SK-N-SH (cell line): ENCODE measurements at regions of chr10 and their contacts with region 1.

Region 1: DNA sequence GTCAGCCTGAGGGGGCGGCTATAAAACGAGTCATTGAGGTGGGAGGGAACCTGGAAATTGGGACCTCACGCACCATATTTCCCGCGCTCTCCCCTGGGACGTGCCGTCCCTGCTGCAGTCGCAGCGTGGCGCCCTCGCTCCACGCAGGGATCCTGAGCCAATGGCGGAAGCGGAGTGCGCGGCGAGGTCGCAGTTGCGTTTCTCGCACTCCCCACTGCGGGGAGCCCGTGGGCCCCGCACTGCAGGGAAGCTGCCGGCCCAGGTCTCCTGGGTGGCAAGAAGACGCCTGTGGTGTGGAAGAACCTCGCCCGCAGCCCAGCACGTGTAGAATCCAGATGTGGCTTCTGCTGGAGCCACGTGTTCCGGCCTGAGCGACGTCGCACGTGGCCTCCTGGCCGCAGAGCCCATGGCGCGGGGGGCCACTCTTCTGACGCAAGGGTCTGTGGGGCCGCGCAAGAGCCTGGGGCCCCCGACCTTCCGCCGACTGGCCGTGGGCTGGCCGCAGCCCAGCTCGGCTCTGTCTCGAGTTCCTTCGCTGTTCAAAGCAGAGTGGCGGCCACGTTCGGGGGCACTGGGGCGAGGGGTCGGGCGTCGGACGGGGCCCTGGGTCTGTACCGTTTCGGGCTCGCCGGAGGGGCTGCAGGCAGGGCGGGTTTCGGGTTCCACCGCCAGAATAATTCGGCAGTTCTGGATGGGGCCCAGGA is 26.4 kb downstream of the HIF1AN start:
- DNase-seq: peak; percentile 94
- H3K4me3 ChIP-seq: no peak overlapping the region; a peak in 1 of 4 replicates
- H3K27ac ChIP-seq: no peak overlapping the region
- H3K4me1 ChIP-seq: no peaks in the 10 kb centered on the region; a peak in 1 of 4 replicates
- H3K27me3 ChIP-seq: no peaks in the 10 kb centered on the region
- CTCF ChIP-seq: peak; percentile 67
- EP300 ChIP-seq: no peak
- RAD21 ChIP-seq: peak; percentile 97

Region 2: GRCh38 chr10:100315615-100316014 is 246.5 kb before region 1 on chr10:
- CTCF ChIA-PET with region 1: no interaction called
- POLR2A ChIA-PET with region 1: no interaction called
- DNase-seq: no peak
- H3K4me3 ChIP-seq: no peak overlapping the region
- H3K27ac ChIP-seq: no peak overlapping the region
- H3K4me1 ChIP-seq: no peaks in the 10 kb centered on the region
- H3K27me3 ChIP-seq: peaks cover 43% of the 10 kb centered on the region; the same call in 1 of the 2 replicates
- CTCF ChIP-seq: no peak
- EP300 ChIP-seq: no peak
- RAD21 ChIP-seq: no peak

Region 3: DNA sequence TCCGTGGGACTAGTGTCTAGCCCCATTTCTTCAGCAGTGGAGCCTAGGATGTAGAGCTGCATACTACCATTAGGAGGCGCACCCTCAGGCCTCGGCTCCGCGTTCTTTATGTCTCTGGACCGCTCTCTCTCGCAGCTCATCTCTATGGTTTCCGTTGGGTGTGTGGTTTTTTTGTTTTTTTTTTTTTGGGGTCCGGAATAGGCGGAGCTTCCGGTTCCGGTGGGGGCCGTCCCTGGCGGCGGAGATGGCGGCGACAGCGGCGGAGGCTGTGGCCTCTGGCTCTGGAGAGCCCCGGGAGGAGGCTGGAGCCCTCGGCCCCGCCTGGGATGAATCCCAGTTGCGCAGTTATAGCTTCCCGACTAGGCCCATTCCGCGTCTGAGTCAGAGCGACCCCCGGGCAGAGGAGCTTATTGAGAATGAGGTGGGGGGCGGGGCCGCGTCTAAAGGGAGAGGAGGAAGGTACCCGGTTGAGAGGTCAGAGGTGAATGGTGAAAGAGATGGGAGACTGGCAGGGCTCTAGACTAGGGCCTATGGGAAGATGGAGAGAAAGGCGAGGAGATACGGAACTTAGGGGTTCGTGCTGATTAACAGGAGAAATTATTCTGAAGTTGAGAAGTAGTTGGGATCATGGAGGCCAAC is 26.3 kb before region 1 on chr10 and contains the start of gene HIF1AN:
- CTCF ChIA-PET with region 1: interaction called, 11 read pairs
- POLR2A ChIA-PET with region 1: no interaction called
- DNase-seq: peak; percentile 95
- H3K4me3 ChIP-seq: peak within 1 kb of the TSS; percentile 69 to 82
- H3K27ac ChIP-seq: peak within 1 kb of the TSS; percentile 26 to 45; a peak in 2 of 4 replicates
- H3K4me1 ChIP-seq: peaks cover 9% of the 10 kb centered on the region in 2 experiments; a peak in 3 of 4 replicates
- H3K27me3 ChIP-seq: no peaks in the 10 kb centered on the region
- CTCF ChIP-seq: peak; percentile 92
- EP300 ChIP-seq: peak; percentile 15 to 18; a peak in 2 of 4 replicates
- RAD21 ChIP-seq: peak; percentile 17; the same call in 1 of the 2 replicates
- polyA plus RNA-seq, gene HIF1AN: 8.1 and 11.0 TPM in 2 replicates

Region 4: GRCh38 chr10:100579261-100580090 is 17.3 kb after region 1 on chr10:
- CTCF ChIA-PET with region 1: interaction called, 19 read pairs
- POLR2A ChIA-PET with region 1: no interaction called
- DNase-seq: no peak
- H3K4me3 ChIP-seq: no peak overlapping the region
- H3K27ac ChIP-seq: no peak overlapping the region
- H3K4me1 ChIP-seq: no peaks in the 10 kb centered on the region
- H3K27me3 ChIP-seq: peaks cover 46% of the 10 kb centered on the region
- CTCF ChIP-seq: no peak
- EP300 ChIP-seq: no peak
- RAD21 ChIP-seq: no peak

Region 5: DNA sequence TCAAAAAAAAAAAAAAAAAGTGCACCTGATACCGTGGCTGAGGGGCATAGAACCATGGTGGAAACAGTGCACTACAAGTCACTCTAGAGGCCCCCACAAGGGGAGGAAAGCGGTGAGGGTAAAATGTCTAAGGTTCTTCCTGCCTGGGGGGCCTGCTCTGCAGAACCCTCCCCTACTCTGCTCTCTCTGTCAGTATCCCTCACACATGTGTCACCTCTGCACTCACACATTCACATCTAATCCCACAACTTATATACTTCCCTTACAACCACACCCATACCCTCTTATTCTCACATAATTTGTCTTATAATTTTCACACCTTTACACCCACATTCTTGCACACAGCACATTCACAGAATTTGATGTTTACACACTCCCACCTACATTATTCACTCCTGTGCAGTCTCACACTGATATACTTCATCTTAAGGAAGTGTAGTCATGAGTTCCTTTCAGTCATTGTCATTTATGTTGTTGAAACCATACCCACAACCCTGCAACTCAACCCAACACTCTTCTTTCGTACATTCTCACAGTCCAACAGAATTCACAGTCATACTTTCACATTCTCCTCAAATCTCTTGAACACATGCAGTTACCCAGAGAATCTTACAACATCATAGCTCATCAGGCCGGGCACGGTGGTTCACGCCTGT is 115.3 kb after region 1 on chr10:
- CTCF ChIA-PET with region 1: interaction called, 12 read pairs
- POLR2A ChIA-PET with region 1: no interaction called
- DNase-seq: no peak
- H3K4me3 ChIP-seq: no peak overlapping the region
- H3K27ac ChIP-seq: no peak overlapping the region
- H3K4me1 ChIP-seq: peaks cover 0 to 2% of the 10 kb centered on the region in 2 experiments; a peak in 1 of 4 replicates
- H3K27me3 ChIP-seq: peaks cover 27% of the 10 kb centered on the region; the same call in 1 of the 2 replicates
- CTCF ChIP-seq: no peak
- EP300 ChIP-seq: no peak
- RAD21 ChIP-seq: no peak

Region 6: GRCh38 chr10:100766693-100767421 is 204.7 kb after region 1 on chr10:
- CTCF ChIA-PET with region 1: interaction called, 17 read pairs
- POLR2A ChIA-PET with region 1: no interaction called
- DNase-seq: peak; percentile 76
- H3K4me3 ChIP-seq: no peak overlapping the region
- H3K27ac ChIP-seq: peak overlapping the region in 1 of 2 experiments; percentile 97; a peak in 2 of 4 replicates
- H3K4me1 ChIP-seq: peaks cover 0 to 35% of the 10 kb centered on the region in 2 experiments; a peak in 2 of 4 replicates
- H3K27me3 ChIP-seq: peaks cover 37% of the 10 kb centered on the region
- CTCF ChIP-seq: no peak
- EP300 ChIP-seq: peak in 1 of 2 experiments; percentile 79; a peak in 2 of 4 replicates
- RAD21 ChIP-seq: peak; percentile 49

Region 7: GRCh38 chr10:100827819-100828737 is 265.9 kb after region 1 on chr10:
- CTCF ChIA-PET with region 1: interaction called, 37 read pairs
- POLR2A ChIA-PET with region 1: no interaction called
- DNase-seq: peak; percentile 91
- H3K4me3 ChIP-seq: peak overlapping the region; percentile 38 to 39
- H3K27ac ChIP-seq: no peak overlapping the region
- H3K4me1 ChIP-seq: peaks cover 0 to 17% of the 10 kb centered on the region in 2 experiments; a peak in 1 of 4 replicates
- H3K27me3 ChIP-seq: peaks cover 77% of the 10 kb centered on the region
- CTCF ChIP-seq: no peak; the same call in 1 of the 2 replicates
- EP300 ChIP-seq: no peak
- RAD21 ChIP-seq: peak; percentile 64

Region 8: DNA sequence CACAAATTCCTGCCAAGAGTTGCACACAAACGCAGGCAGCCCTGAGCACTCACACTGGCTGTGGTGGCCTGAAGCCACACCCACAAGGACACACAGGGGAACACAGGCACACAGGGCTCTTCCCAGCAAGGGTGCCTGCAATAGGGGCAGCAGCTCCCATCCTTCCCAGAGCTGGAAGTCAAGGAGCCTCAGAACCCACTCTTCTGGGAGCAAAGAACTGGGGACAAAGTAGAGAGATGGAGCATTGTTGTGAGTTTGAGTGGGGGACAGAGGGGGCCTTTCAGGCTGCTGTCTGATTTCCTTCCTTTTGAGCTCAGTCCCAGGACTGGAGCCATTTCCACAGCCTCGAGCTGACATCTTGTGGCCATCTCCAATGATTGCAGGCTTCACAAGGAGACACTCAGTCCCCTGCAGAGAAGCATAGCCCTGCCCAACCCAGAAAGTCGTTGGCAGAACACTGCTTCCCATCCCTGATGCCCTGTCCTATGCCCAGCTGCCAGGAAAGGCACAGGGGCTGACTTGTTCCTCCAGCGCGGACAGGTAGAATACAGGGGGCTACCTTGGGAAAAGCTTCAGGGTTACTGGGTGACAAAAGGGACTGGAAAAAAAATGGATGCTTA is 316.2 kb after region 1 on chr10:
- CTCF ChIA-PET with region 1: interaction called, 143 read pairs
- POLR2A ChIA-PET with region 1: interaction called, 6 read pairs
- DNase-seq: peak; percentile 80
- H3K4me3 ChIP-seq: no peak overlapping the region
- H3K27ac ChIP-seq: no peak overlapping the region
- H3K4me1 ChIP-seq: peaks cover 0 to 30% of the 10 kb centered on the region in 2 experiments; a peak in 2 of 4 replicates
- H3K27me3 ChIP-seq: no peaks in the 10 kb centered on the region
- CTCF ChIP-seq: peak; percentile 79
- EP300 ChIP-seq: no peak
- RAD21 ChIP-seq: peak; percentile 96